GM12878 (cell line): ENCODE measurements at regions of chr19 and their contacts with region 1.

Region 1: DNA sequence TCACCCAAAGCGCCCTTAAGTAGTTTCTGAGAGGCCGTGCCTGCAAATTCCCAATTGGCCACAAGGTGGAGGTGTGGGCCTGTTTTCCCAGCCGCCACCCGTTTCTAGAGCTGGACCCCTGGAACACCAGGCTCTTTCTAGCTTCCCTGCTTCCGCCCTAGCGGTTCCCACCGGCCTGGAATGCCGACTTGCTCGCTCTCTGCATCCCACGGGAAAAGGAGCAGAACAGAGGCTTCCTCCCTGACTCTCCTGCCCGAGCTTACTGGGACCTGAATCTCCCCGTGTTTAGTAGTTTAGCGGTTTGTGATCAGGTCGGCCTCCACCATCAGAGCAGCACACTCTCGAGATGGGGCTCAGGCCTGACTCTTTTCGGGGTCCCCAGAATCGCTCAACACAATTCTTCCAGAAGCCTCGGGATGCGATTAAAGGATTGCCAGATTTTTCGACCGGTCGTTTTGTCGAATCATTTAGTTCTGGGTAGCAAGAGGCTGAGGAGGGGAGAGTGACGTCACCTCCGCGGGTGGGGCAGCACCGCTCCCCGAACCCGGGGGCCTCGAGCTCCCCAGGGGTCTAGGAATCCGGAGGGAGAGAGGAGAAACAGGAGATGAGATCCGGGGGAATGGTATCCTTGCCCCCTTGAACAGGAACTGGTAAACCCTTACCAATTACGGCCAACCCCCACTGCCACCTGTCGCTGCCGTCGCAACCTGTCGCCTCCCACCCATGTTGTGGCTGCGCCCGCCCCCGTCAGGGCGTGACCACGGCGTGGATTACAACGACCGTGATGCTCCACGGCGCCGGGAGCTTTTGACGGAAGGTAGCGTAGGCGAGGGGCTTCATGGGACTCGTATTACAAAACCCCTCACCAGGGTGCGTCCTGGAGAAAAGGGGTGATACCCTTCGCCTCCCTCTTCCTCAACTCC is 8.0 kb downstream of the NAPSA start:
- DNase-seq: peak; percentile 46
- ATAC-seq: peak; percentile 80
- H3K4me3 ChIP-seq: peak overlapping the region; percentile 45
- H3K27ac ChIP-seq: peak overlapping the region; percentile 95
- H3K4me1 ChIP-seq: peaks cover 42% of the 10 kb centered on the region
- H3K27me3 ChIP-seq: no peaks in the 10 kb centered on the region
- CTCF ChIP-seq: peak; percentile 79 to 82 (median 79)
- EP300 ChIP-seq: 0 out of 4 replicates have a peak, but pooled peaks of 1 of the 2 experiments have one; percentile 31
- POLR2A ChIP-seq: peak; percentile 70
- RAD21 ChIP-seq: peak; percentile 84

Region 2: GRCh38 chr19:50329146-50329925 is 28.1 kb before region 1 on chr19 and contains the start of gene KCNC3:
- CTCF ChIA-PET with region 1: interaction called, 6 read pairs
- POLR2A ChIA-PET with region 1: interaction called, 5 read pairs
- RAD21 ChIA-PET with region 1: interaction called, 12 read pairs
- SMC1A ChIA-PET with region 1: interaction called, 13 read pairs
- in situ Hi-C with region 1: no loop called
- intact Hi-C with region 1: no loop called
- DNase-seq: peak; percentile 83
- ATAC-seq: peak; percentile 78
- H3K4me3 ChIP-seq: peak within 1 kb of the TSS; percentile 66
- H3K27ac ChIP-seq: peak within 1 kb of the TSS; percentile 58
- H3K4me1 ChIP-seq: peaks cover 36% of the 10 kb centered on the region
- H3K27me3 ChIP-seq: peaks cover 2 to 16% of the 10 kb centered on the region in 2 experiments; a peak in 3 of 4 replicates
- CTCF ChIP-seq: no peak
- EP300 ChIP-seq: no peak
- POLR2A ChIP-seq: peak; percentile 92
- RAD21 ChIP-seq: no peak
- polyA plus RNA-seq, gene KCNC3: not detected

Region 3: GRCh38 chr19:50368649-50369570 is 11.5 kb after region 1 on chr19:
- CTCF ChIA-PET with region 1: interaction called, 65 read pairs
- POLR2A ChIA-PET with region 1: interaction called, 17 read pairs
- RAD21 ChIA-PET with region 1: interaction called, 47 read pairs
- SMC1A ChIA-PET with region 1: interaction called, 48 read pairs
- in situ Hi-C with region 1: no loop called
- intact Hi-C with region 1: no loop called
- DNase-seq: peak; percentile 78
- ATAC-seq: peak; percentile 86
- H3K4me3 ChIP-seq: peak overlapping the region; percentile 93
- H3K27ac ChIP-seq: peak overlapping the region; percentile 82
- H3K4me1 ChIP-seq: peaks cover 19% of the 10 kb centered on the region
- H3K27me3 ChIP-seq: no peaks in the 10 kb centered on the region
- CTCF ChIP-seq: peak; percentile 79 to 81 (median 79)
- EP300 ChIP-seq: no peak
- POLR2A ChIP-seq: peak; percentile 69
- RAD21 ChIP-seq: peak; percentile 77

Region 4: GRCh38 chr19:50414864-50415660 is 57.6 kb after region 1 on chr19:
- CTCF ChIA-PET with region 1: interaction called, 28 read pairs
- POLR2A ChIA-PET with region 1: interaction called, 18 read pairs
- RAD21 ChIA-PET with region 1: interaction called, 18 read pairs
- SMC1A ChIA-PET with region 1: interaction called, 11 read pairs
- in situ Hi-C with region 1: no loop called
- intact Hi-C with region 1: loop called (anchors 2 kb)
- DNase-seq: no peak
- ATAC-seq: peak; percentile 68
- H3K4me3 ChIP-seq: peak overlapping the region; percentile 22
- H3K27ac ChIP-seq: peak overlapping the region; percentile 95
- H3K4me1 ChIP-seq: peaks cover 35% of the 10 kb centered on the region
- H3K27me3 ChIP-seq: no peaks in the 10 kb centered on the region
- CTCF ChIP-seq: peak; percentile 85 to 94 (median 89)
- EP300 ChIP-seq: no peak
- POLR2A ChIP-seq: peak; percentile 73; the same call in 1 of the 2 replicates
- RAD21 ChIP-seq: peak; percentile 64

Region 5: DNA sequence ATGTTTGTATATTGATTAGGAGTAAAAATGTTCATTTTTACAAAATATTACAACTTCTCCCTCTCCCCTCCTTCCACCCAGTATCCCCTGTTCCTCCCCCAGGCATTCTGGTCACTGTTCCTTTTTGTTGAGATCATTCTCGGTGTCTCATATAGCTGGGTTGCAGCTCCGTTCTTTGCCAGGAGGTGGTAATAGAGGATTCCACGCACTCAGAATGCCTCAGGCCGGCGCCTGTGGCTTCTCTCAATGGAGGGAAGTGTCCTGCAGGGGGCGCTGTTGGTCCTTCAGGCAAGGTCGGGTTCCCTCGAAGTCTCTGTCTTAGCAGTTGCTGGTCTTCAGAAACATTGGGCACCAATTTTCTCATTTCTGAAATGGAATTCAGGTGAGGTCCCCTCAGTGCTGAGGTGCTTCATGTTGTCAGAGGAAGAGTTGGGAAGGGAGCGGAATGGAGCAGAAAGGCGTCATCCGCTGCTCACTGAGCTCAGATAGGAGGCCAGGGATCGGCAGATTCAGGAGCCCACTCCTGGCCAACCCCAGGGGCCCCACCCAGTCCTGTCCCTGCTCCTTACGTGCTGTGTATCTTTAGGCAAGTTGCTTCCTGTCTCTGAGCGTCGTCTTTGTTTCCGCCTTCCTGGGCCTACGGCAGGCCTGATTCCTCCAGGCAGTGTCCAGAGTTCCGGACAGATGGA is 129.5 kb after region 1 on chr19:
- CTCF ChIA-PET with region 1: no interaction called
- POLR2A ChIA-PET with region 1: no interaction called
- RAD21 ChIA-PET with region 1: no interaction called
- SMC1A ChIA-PET with region 1: no interaction called
- in situ Hi-C with region 1: no loop called
- intact Hi-C with region 1: no loop called
- DNase-seq: no peak
- ATAC-seq: peak; percentile 58
- H3K4me3 ChIP-seq: no peak overlapping the region
- H3K27ac ChIP-seq: no peak overlapping the region
- H3K4me1 ChIP-seq: no peaks in the 10 kb centered on the region
- H3K27me3 ChIP-seq: no peaks in the 10 kb centered on the region
- CTCF ChIP-seq: peak; percentile 24 to 63 (median 40); a peak in 5 of 6 replicates
- EP300 ChIP-seq: no peak
- POLR2A ChIP-seq: no peak
- RAD21 ChIP-seq: peak; percentile 36; the same call in 1 of the 2 replicates

Region 6: DNA sequence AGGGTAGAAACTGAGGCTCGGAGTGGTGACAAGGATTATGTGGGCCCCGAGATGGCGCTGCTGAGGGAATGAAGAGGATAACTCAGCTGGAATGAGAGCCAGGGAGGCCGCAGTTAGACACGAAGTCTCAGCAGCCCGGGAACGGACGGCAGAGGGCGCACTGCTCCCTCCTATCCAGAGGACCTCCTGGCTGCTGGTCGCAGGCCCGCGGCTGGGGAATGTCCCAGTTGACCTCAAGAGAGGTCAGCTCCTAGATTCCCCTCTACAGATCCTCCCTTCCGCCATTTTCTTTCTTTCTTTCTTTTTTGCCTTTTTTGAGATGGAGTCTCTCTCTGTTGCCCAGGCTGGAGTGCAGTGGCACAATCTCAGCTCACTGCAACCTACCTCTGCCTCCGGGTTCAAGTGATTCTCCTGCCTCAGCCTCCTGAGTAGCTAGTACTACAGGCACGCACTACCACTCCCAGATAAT is 180.4 kb after region 1 on chr19:
- CTCF ChIA-PET with region 1: interaction called, 6 read pairs
- POLR2A ChIA-PET with region 1: interaction called, 3 read pairs
- RAD21 ChIA-PET with region 1: interaction called, 8 read pairs
- SMC1A ChIA-PET with region 1: no interaction called
- in situ Hi-C with region 1: no loop called
- intact Hi-C with region 1: loop called (anchors 10 kb)
- DNase-seq: no peak
- ATAC-seq: peak; percentile 88
- H3K4me3 ChIP-seq: no peak overlapping the region
- H3K27ac ChIP-seq: no peak overlapping the region
- H3K4me1 ChIP-seq: peaks cover 8% of the 10 kb centered on the region
- H3K27me3 ChIP-seq: no peaks in the 10 kb centered on the region
- CTCF ChIP-seq: peak; percentile 77 to 83 (median 82)
- EP300 ChIP-seq: no peak
- POLR2A ChIP-seq: no peak
- RAD21 ChIP-seq: peak; percentile 58

Region 7: GRCh38 chr19:50705422-50706019 is 348.1 kb after region 1 on chr19:
- CTCF ChIA-PET with region 1: interaction called, 7 read pairs
- POLR2A ChIA-PET with region 1: no interaction called
- RAD21 ChIA-PET with region 1: no interaction called
- SMC1A ChIA-PET with region 1: no interaction called
- in situ Hi-C with region 1: no loop called
- intact Hi-C with region 1: loop called (anchors 5 kb)
- DNase-seq: peak; percentile 21
- ATAC-seq: peak; percentile 96
- H3K4me3 ChIP-seq: no peak overlapping the region
- H3K27ac ChIP-seq: no peak overlapping the region
- H3K4me1 ChIP-seq: no peaks in the 10 kb centered on the region
- H3K27me3 ChIP-seq: no peaks in the 10 kb centered on the region; a peak in 1 of 4 replicates
- CTCF ChIP-seq: peak; percentile 65 to 84 (median 73)
- EP300 ChIP-seq: no peak
- POLR2A ChIP-seq: no peak
- RAD21 ChIP-seq: peak; percentile 62

Region 8: DNA sequence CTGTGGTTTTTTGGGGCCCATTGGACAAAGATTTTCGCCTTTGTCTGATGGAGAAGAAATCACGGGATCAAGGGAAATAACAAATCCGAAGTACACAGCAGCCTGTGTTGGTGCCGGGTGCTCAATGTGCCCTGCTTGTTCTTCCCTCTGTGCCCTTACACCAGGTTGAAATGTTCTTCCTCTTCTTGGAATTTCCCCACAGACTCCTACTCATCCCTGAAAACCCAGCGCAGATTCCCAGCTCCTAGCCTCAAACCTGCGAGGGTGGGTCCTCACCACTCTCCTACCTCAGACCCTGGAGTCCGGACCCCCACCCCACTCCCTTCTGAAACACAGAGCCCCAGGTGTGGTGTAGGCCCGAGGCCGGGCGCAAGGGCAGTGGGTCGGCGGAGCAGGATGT is 427.9 kb after region 1 on chr19:
- CTCF ChIA-PET with region 1: interaction called, 9 read pairs
- POLR2A ChIA-PET with region 1: no interaction called
- RAD21 ChIA-PET with region 1: interaction called, 3 read pairs
- SMC1A ChIA-PET with region 1: interaction called, 5 read pairs
- in situ Hi-C with region 1: loop called (anchors 5 kb)
- intact Hi-C with region 1: loop called (anchors 1 kb)
- DNase-seq: no peak
- ATAC-seq: no peak
- H3K4me3 ChIP-seq: no peak overlapping the region
- H3K27ac ChIP-seq: no peak overlapping the region
- H3K4me1 ChIP-seq: no peaks in the 10 kb centered on the region; the same call in 1 of the 2 replicates
- H3K27me3 ChIP-seq: no peaks in the 10 kb centered on the region
- CTCF ChIP-seq: no peak
- EP300 ChIP-seq: no peak
- POLR2A ChIP-seq: no peak
- RAD21 ChIP-seq: no peak